Common myeloid progenitor, CD34-positive (primary cell): ENCODE measurements at regions of chr1 and their contacts with region 1.

Region 1: GRCh38 chr1:167059045-167059808 is 30.9 kb downstream of the GPA33 start:
- DNase-seq: peak; percentile 57 to 71 (median 68)
- H3K4me3 ChIP-seq: peak overlapping the region in 3 of 7 experiments; percentile 11 to 72 (median 38)
- H3K27ac ChIP-seq: no peak overlapping the region
- H3K4me1 ChIP-seq: peaks cover 0 to 20% (median 14%) of the 10 kb centered on the region in 4 experiments
- H3K27me3 ChIP-seq: no peaks in the 10 kb centered on the region

Region 2: DNA sequence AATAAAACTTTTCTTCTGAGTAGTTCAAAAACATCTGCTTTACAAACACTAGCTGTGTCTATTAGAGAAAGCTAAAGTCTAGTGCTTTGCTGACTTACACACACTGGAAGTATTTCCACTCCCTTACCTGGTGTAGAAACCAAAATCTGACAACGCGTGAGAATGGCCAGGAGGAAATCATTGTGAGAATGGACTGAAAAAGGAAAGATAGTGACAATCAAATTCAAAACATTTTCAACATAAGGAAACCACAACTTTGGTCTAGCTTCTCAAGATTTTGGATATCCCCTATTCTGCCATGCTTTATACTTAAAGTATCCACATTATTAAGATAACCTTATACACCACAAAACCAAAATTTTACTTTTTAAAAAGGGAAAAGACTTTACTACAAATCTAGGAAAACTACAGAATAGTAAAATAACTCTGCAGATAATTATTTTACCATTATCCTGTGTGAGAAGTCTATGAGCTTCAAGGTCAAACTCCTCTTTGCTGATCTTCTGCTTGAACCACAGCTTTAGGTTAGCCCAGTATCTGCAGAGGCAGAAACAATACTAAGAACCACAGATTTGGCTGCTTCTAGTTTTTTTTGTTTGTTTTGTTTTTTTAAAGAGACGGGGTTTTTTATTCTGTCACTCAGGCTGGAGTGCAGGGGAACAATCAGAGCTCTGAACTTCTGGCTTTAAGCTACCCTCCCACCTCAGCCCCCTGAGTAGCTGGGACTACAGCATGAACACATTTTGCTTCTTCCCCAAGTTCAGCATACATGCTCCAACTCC is 189.7 kb before region 1 on chr1:
- CTCF ChIA-PET with region 1: interaction called, 10 read pairs
- POLR2A ChIA-PET with region 1: no interaction called
- DNase-seq: no peak
- H3K4me3 ChIP-seq: no peak overlapping the region
- H3K27ac ChIP-seq: no peak overlapping the region
- H3K4me1 ChIP-seq: peaks cover 0 to 6% (median 2%) of the 10 kb centered on the region in 4 experiments
- H3K27me3 ChIP-seq: no peaks in the 10 kb centered on the region

Region 3: DNA sequence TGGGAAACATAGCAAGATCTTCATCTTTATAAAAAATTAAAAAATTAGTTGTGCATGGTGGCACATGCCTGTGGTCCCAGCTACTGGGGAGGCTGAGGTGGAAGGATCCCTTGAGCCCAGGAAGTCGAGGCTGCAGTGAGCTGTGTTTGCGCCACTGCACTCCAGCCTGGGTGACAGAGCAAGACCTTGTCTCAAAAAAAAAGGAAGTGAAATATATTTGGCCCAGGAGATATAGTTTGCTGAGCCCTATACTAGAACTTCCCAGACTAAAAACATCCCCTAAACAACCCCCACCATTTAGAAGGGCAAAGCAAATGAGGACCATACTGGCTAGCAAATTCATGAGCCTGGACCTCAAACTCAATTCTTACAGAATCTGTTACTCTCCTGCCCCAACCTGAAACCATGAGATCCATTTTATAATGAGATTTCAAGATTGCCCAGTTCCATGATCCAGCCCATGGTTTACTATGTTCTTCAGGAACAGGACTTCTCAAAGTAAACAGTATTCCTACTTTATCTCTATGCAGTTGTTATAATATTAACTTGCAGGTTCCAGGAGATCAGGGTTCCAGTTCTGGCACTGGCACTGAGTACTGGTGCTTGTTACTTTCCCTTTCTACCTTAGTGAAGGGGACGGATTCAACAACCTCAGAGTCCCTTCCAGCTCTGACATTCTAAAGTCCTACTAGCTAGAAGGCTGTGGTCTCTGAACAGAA is 134.2 kb before region 1 on chr1:
- CTCF ChIA-PET with region 1: interaction called, 666 read pairs
- POLR2A ChIA-PET with region 1: interaction called, 3 read pairs
- DNase-seq: no peak
- H3K4me3 ChIP-seq: no peak overlapping the region
- H3K27ac ChIP-seq: no peak overlapping the region
- H3K4me1 ChIP-seq: peaks cover 0 to 12% (median 10%) of the 10 kb centered on the region in 4 experiments
- H3K27me3 ChIP-seq: peaks cover 1 to 29% (median 11%) of the 10 kb centered on the region in 5 experiments

Region 4: DNA sequence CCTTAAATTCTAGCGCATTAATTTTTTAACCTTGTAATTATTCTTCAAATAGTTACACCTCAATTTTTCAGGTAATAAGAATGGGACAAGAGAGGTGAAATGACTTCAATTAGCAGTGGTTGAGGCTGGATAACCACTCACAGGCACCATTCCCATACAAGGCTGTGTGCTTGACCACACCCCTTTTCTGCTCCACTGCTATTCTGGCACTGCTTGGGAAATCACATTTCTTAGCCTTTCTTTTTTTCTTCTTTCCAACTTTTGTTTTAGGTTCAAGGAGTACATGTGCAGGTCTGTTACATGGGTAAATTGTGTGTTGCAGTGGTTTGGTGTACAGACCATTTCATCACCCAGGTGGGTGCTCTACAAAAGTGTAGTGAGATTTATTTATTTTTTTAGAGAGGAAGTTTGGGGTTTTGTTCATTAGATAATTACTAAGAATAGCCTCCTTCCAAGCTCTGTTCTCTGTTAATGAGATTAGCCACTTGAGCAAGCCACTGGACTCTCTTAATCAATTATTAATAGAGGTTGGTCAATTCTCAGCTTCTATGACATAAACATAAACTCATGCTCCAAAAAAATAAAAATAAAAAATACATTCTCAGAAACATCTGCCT is 98.3 kb before region 1 on chr1:
- CTCF ChIA-PET with region 1: interaction called, 10 read pairs
- POLR2A ChIA-PET with region 1: no interaction called
- DNase-seq: no peak
- H3K4me3 ChIP-seq: no peak overlapping the region
- H3K27ac ChIP-seq: no peak overlapping the region
- H3K4me1 ChIP-seq: no peaks in the 10 kb centered on the region
- H3K27me3 ChIP-seq: peaks cover 0 to 3% (median 0%) of the 10 kb centered on the region in 5 experiments

Region 5: DNA sequence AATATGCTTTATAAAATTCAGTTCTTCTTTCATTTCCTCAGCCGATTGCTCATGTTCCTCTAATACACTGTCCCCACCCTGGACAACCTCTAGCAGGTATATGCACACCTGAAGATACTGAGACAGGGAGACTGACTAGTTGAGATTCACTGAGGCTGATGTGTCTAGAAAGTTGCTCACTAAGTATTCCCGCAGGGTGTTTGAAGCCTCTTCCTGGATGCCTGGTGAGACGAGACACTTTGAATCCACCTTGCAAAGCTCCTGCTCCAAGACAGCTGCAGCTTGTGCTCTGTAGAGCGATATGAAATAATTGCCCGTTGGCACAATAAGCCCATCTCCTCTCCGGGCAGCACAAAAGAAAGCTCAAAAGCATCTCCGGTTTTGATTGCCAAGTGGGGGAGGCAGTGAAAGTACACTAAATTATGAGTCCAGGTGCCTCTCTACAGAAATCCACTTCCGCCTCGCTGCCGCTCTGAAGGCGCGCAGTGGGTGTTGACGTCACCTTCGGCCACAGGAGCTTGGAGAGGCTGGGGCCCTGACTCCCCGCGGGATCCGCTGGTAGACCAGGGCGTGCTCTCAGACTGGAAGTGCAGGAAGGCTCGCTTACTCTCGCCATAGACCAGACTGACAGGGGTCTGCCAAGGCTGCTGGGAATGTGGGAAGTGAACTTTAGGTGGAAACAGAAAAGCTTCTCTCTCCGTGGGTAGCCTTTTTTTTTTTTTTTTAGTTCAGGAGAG is 15.3 kb before region 1 on chr1:
- CTCF ChIA-PET with region 1: interaction called, 12 read pairs
- POLR2A ChIA-PET with region 1: no interaction called
- DNase-seq: peak; percentile 78 to 91 (median 87)
- H3K4me3 ChIP-seq: peak overlapping the region; percentile 37 to 83 (median 69)
- H3K27ac ChIP-seq: no peak overlapping the region
- H3K4me1 ChIP-seq: peaks cover 3 to 11% (median 6%) of the 10 kb centered on the region in 4 experiments
- H3K27me3 ChIP-seq: no peaks in the 10 kb centered on the region

Region 6: GRCh38 chr1:167165948-167166689 is 106.9 kb after region 1 on chr1:
- CTCF ChIA-PET with region 1: no interaction called
- POLR2A ChIA-PET with region 1: no interaction called
- DNase-seq: no peak
- H3K4me3 ChIP-seq: no peak overlapping the region
- H3K27ac ChIP-seq: no peak overlapping the region
- H3K4me1 ChIP-seq: peaks cover 5 to 21% (median 18%) of the 10 kb centered on the region in 4 experiments
- H3K27me3 ChIP-seq: no peaks in the 10 kb centered on the region